Naive thymus-derived CD4-positive, alpha-beta T cell (primary cell): ENCODE measurements at regions of chr12 and their contacts with region 1.

Region 1: DNA sequence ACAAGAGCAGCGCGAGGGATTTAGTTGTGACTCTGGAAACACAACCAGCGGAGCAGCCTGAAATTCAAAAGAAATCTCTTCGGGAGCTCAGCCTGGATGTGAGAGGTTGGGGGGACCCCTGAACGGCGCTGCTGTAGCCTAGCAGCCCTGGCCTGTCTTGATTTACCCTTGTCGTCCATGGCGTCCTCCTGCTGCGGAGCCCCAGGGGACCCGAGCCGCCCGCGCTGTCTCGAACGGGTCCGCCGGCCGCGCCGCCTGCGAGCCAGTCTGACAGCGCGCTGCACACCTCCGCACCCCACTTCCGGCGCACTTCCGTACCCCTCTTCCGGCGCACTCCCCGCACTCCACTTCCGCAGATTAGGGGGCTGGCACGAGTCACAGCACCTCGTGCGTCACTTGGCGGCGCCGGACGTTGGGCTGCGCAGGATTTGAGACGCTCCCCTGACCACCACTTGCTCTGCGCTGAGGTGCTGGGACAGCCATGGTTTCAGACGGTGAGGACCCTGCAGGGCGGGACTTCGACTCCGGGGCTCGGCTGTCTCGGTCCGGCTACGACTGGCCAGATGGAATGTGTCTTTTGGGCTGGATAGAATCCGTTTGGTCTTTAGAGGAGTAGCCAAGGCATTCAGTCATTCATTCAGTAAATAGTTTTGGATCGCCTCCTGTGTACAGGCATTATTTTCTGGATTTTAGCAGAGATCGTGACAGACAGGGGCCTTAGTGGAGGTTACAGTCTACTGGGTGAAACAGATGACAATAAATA is at the starts of genes EIF2B1 and GTF2H3:
- DNase-seq: peak; percentile 83 to 96 (median 94)
- ATAC-seq: peak; percentile 98
- H3K4me3 ChIP-seq: peak within 1 kb of the TSS; percentile 85
- H3K4me3 Mint-ChIP-seq: peak within 1 kb of the TSS; percentile 89 to 100 (median 96)
- H3K27ac ChIP-seq: peak within 1 kb of the TSS; percentile 91
- H3K27ac Mint-ChIP-seq: peak within 1 kb of the TSS; percentile 91 to 99 (median 96)
- H3K4me1 ChIP-seq: peaks cover 11 to 16% of the 10 kb centered on the region in 2 donors
- H3K4me1 Mint-ChIP-seq: peaks cover 21 to 54% (median 43%) of the 10 kb centered on the region in 7 donors
- H3K27me3 ChIP-seq: no peaks in the 10 kb centered on the region
- H3K27me3 Mint-ChIP-seq: no peaks in the 10 kb centered on the region
- total RNA-seq, gene EIF2B1: 44.0 to 64.3 (median 49.5) TPM
- total RNA-seq, gene GTF2H3: 21.4 to 39.7 (median 27.7) TPM

Region 2: DNA sequence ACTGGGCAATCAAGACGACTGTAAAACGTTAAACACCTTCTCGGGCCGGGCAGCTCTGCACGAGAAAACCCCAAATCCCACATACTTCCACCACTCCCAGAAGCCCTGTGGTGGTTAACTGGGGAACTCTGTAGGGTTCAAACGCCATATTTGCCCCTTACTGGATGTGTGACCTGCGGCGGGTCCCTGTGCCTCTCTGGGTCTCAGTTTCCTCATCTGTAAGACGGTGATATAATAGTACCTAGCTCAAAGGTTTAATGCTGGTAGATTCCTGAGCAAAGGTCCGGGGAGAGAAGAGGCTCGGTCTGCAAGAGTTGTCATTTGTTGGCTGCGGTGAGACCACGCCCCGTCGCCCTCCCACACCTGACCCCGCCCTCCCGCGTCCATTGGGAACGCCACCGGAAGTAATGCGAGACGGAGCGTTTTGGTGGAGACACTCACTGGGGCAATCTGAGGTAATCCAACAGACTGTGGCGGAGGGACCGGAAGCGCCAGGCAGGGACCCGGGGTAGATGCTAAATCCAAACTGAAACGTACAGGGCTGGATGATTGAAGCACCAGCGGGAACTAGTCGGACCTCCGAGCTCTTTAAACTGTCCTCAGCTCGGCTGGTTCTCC is 659.2 kb before region 1 on chr12:
- CTCF ChIA-PET with region 1: no interaction called
- POLR2A ChIA-PET with region 1: interaction called, 3 read pairs
- intact Hi-C with region 1: loop called in 1 of 2 experiments (anchors 1 kb)
- DNase-seq: peak; percentile 92 to 98 (median 98)
- ATAC-seq: peak; percentile 92
- H3K4me3 ChIP-seq: peak overlapping the region; percentile 100
- H3K4me3 Mint-ChIP-seq: peak overlapping the region; percentile 92 to 99 (median 97)
- H3K27ac ChIP-seq: peak overlapping the region; percentile 98
- H3K27ac Mint-ChIP-seq: peak overlapping the region; percentile 99 to 100 (median 99)
- H3K4me1 ChIP-seq: peaks cover 18 to 23% of the 10 kb centered on the region in 2 donors
- H3K4me1 Mint-ChIP-seq: peaks cover 17 to 39% (median 30%) of the 10 kb centered on the region in 7 donors
- H3K27me3 ChIP-seq: no peaks in the 10 kb centered on the region
- H3K27me3 Mint-ChIP-seq: peaks cover 0 to 3% (median 0%) of the 10 kb centered on the region in 5 donors

Region 3: DNA sequence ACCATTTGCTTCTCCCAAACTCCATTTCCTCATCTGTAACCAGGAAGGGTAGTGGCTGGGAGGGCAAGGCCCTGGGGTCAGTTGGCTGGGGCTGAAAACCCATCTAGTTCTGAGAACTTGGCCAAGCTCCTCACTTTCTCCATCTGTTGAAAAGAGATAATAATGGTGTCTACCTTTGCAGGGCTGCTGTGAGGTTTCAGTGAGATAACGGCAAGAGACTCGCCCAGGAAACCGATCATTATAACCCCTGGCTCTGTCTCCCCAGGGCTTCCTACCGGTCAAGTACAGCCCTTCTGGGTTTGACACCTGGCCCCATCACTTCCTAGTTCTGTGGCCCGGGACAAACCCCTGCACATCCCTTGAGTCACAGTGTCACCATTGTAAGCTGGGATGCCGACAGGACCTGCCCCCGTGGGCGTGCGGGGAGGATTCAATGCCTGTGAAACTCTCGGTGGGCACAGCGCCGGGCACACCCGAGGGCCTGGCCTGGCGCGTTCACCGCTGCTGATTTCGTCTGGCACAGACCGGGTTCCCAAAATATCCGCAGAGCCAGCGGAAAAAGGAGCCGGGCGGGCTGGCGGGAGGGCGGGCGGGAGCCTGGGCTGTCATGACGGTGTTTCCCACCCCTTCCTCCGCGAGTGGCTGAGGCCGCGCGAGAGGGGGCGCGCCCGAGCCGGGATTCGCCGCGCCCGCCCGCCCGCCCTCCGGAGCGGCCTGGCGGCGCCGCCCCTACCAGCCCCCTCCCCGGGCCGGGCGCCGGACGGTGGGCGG is 245.2 kb before region 1 on chr12:
- CTCF ChIA-PET with region 1: no interaction called
- POLR2A ChIA-PET with region 1: no interaction called
- intact Hi-C with region 1: loop called in 1 of 2 experiments (anchors 5 kb)
- DNase-seq: peak; percentile 64 to 84 (median 75)
- ATAC-seq: peak; percentile 75
- H3K4me3 ChIP-seq: peak overlapping the region; percentile 88
- H3K4me3 Mint-ChIP-seq: peak overlapping the region; percentile 78 to 91 (median 84)
- H3K27ac ChIP-seq: peak overlapping the region; percentile 79
- H3K27ac Mint-ChIP-seq: peak overlapping the region in 8 of 9 donors; percentile 47 to 93 (median 86)
- H3K4me1 ChIP-seq: peaks cover 11 to 13% of the 10 kb centered on the region in 2 donors
- H3K4me1 Mint-ChIP-seq: peaks cover 10 to 49% (median 43%) of the 10 kb centered on the region in 7 donors
- H3K27me3 ChIP-seq: no peaks in the 10 kb centered on the region
- H3K27me3 Mint-ChIP-seq: no peaks in the 10 kb centered on the region

Region 4: GRCh38 chr12:123601602-123602489 is 31.7 kb before region 1 on chr12 and contains the start of gene DDX55:
- CTCF ChIA-PET with region 1: no interaction called
- POLR2A ChIA-PET with region 1: interaction called, 5 read pairs
- intact Hi-C with region 1: loop called (anchors 1 kb)
- DNase-seq: peak; percentile 77 to 87 (median 86)
- ATAC-seq: peak; percentile 96
- H3K4me3 ChIP-seq: peak within 1 kb of the TSS; percentile 99
- H3K4me3 Mint-ChIP-seq: peak within 1 kb of the TSS; percentile 89 to 99 (median 97)
- H3K27ac ChIP-seq: peak within 1 kb of the TSS; percentile 84
- H3K27ac Mint-ChIP-seq: peak within 1 kb of the TSS; percentile 83 to 98 (median 93)
- H3K4me1 ChIP-seq: peaks cover 4 to 8% of the 10 kb centered on the region in 2 donors
- H3K4me1 Mint-ChIP-seq: peaks cover 11 to 47% (median 30%) of the 10 kb centered on the region in 7 donors
- H3K27me3 ChIP-seq: no peaks in the 10 kb centered on the region
- H3K27me3 Mint-ChIP-seq: no peaks in the 10 kb centered on the region
- total RNA-seq, gene DDX55: 26.0 to 54.0 (median 43.4) TPM

Region 5: GRCh38 chr12:123670882-123671728 is 37.5 kb after region 1 on chr12 and contains the start of gene TCTN2:
- CTCF ChIA-PET with region 1: no interaction called
- POLR2A ChIA-PET with region 1: interaction called, 3 read pairs
- intact Hi-C with region 1: loop called (anchors 1 kb)
- DNase-seq: peak; percentile 81 to 93 (median 91)
- ATAC-seq: peak; percentile 100
- H3K4me3 ChIP-seq: peak within 1 kb of the TSS; percentile 75
- H3K4me3 Mint-ChIP-seq: peak within 1 kb of the TSS; percentile 75 to 92 (median 86)
- H3K27ac ChIP-seq: peak within 1 kb of the TSS; percentile 69
- H3K27ac Mint-ChIP-seq: peak within 1 kb of the TSS; percentile 31 to 86 (median 68)
- H3K4me1 ChIP-seq: peaks cover 3 to 10% of the 10 kb centered on the region in 2 donors
- H3K4me1 Mint-ChIP-seq: peaks cover 5 to 19% (median 11%) of the 10 kb centered on the region in 7 donors
- H3K27me3 ChIP-seq: no peaks in the 10 kb centered on the region
- H3K27me3 Mint-ChIP-seq: no peaks in the 10 kb centered on the region
- total RNA-seq, gene TCTN2: 2.5 to 9.1 (median 5.3) TPM

Region 6: DNA sequence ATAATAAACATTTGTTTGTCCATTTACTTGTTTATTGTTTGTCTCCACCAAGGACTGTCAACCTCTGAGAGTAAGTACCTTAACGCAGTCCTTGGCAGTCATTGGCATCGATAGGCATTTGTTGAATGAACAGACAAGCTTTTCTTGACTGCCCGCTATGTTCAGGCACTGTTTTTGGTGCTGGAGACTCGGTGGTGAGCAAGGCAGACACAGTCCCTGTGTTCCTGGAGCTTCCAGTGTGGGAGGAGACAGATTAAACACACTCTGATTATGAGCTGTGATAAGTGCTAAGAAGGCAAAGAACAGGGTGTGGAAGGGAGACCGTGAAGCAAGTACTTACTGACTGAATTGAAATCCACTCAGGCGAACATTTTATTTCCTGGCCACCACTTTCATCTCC is 79.8 kb after region 1 on chr12:
- CTCF ChIA-PET with region 1: no interaction called
- POLR2A ChIA-PET with region 1: interaction called, 4 read pairs
- intact Hi-C with region 1: loop called (anchors 1 kb)
- DNase-seq: peak in 2 of 9 donors; percentile 7 to 41
- ATAC-seq: no peak
- H3K4me3 ChIP-seq: peak overlapping the region; percentile 95
- H3K4me3 Mint-ChIP-seq: peak overlapping the region; percentile 81 to 100 (median 90)
- H3K27ac ChIP-seq: peak overlapping the region; percentile 77
- H3K27ac Mint-ChIP-seq: peak overlapping the region; percentile 37 to 93 (median 79)
- H3K4me1 ChIP-seq: peaks cover 11 to 21% of the 10 kb centered on the region in 2 donors
- H3K4me1 Mint-ChIP-seq: peaks cover 28 to 42% (median 38%) of the 10 kb centered on the region in 7 donors
- H3K27me3 ChIP-seq: no peaks in the 10 kb centered on the region
- H3K27me3 Mint-ChIP-seq: no peaks in the 10 kb centered on the region

Region 7: DNA sequence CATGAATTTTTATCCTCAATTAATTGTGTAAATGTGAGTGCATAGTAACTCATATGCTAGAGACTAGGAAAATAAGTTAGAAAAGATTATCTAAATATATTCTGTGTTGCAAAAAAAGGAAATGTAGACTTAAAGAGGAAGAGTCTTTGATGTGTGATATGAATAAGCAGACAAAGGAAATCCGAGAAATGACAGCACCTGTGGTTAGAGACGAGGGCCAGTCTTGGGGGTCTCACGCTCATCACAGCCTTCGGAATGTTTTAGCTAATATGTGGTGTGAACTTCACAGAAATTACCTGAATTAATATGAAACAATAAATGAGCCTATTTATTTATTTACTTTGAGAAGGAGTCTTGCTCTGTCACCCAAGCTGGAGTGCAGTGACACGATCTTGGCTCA is 90.2 kb after region 1 on chr12:
- CTCF ChIA-PET with region 1: no interaction called
- POLR2A ChIA-PET with region 1: no interaction called
- intact Hi-C with region 1: no loop called
- DNase-seq: no peak
- ATAC-seq: no peak
- H3K4me3 ChIP-seq: no peak overlapping the region
- H3K4me3 Mint-ChIP-seq: peak overlapping the region in 7 of 10 donors; percentile 27 to 67 (median 56)
- H3K27ac ChIP-seq: no peak overlapping the region
- H3K27ac Mint-ChIP-seq: peak overlapping the region in 4 of 9 donors; percentile 22 to 74 (median 46)
- H3K4me1 ChIP-seq: no peaks in the 10 kb centered on the region
- H3K4me1 Mint-ChIP-seq: peaks cover 4 to 32% (median 9%) of the 10 kb centered on the region in 7 donors
- H3K27me3 ChIP-seq: no peaks in the 10 kb centered on the region
- H3K27me3 Mint-ChIP-seq: no peaks in the 10 kb centered on the region

Region 8: DNA sequence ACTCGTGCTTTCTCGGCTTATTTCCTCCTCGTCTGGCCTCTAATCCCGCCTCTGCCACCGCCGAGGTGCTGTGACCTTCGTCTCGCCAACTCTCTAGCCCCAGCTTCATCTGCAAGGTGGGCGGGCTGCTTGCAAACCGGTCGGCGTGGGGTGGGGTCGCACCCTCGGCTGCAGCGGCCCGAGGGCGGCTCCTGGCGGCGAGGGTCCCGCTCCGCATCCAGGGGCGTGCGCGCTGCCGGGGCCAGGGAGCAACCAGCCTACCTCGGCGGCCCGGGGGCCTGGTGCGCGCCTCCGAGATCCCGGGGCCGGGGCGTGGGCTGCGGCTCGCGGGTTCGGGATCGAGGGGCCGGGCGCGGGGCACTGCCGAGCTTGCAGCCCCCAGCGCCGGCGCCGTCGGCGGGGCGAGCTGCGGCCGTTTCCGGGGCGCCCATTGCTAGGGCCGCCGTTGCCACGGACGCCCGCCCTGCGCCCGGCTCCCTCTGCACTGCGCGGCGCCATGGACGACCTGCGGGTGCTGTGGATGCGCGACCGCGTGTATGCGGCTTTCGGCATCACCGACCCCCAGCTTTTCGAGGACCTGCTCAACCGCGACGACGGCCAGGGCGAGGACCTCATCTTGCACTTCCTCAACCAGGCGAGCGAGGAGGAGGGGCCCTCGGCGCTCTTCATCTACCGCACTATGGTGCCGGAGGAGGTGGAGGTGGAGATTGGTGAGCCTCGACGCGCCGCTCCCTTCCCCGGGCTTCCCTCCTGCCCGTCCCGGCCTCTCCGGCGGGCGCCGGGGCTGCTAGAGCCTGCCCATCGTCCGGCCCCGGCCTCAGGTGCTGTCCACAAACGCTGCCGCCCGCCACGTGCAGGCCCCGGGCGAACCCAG is 128.5 kb after region 1 on chr12 and contains the start of gene DNAH10:
- CTCF ChIA-PET with region 1: no interaction called
- POLR2A ChIA-PET with region 1: no interaction called
- intact Hi-C with region 1: loop called in 1 of 2 experiments (anchors 5 kb)
- DNase-seq: peak; percentile 15 to 57 (median 37)
- ATAC-seq: peak; percentile 81
- H3K4me3 ChIP-seq: peak within 1 kb of the TSS; percentile 52
- H3K4me3 Mint-ChIP-seq: peak within 1 kb of the TSS; percentile 75 to 94 (median 85)
- H3K27ac ChIP-seq: no peak within 1 kb of the TSS
- H3K27ac Mint-ChIP-seq: peak within 1 kb of the TSS in 2 of 9 donors; percentile 18 to 60
- H3K4me1 ChIP-seq: peaks cover 0 to 4% of the 10 kb centered on the region in 2 donors
- H3K4me1 Mint-ChIP-seq: peaks cover 0 to 12% (median 4%) of the 10 kb centered on the region in 7 donors
- H3K27me3 ChIP-seq: no peaks in the 10 kb centered on the region
- H3K27me3 Mint-ChIP-seq: peaks cover 0 to 6% (median 0%) of the 10 kb centered on the region in 5 donors
- total RNA-seq, gene DNAH10: 0.05 to 0.50 (median 0.11) TPM